GM23248 (cell line): ENCODE measurements at regions of chr11 and their contacts with region 1.

Region 1: DNA sequence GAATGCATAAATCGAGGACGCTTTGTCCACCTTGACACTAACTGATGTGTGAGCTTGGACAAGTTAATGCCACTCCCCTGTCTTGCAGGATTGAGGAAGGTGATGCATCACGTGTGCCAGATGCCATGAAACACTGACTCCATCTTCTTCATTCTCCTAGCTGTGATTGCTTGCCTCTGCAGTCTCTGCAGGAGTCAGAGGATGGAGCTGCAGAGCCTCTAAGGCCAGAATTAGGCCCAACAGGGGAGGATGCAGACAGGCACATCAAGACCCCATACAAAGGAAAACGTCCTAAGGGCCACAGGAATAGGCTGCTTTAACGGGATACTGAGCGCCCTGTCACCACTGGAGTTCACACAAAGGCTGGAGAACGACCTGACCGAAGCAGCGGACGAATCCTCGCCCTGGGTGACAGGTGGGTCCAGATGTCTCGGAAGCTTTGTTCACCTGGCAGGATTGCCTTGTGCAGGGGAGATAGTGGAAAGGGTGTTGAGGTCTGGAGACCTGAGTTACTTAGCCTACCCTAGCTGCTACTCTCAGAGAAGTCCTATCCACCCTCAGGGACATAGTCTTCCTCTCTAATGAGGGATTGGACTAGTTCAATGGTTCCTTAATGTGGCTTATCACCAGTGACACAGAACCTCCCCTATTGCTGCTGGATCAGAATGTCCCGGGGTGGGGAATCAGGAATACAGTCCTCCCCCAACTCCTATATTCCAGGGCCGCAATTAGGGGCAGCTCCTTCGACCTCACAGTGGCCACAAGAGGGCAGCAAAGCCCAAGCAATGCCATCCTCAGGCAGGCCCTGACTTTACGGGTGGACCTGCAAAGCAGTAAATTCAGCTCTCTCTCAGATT is 32.4 kb downstream of the DBX1 start:
- DNase-seq: peak; percentile 82
- H3K4me3 ChIP-seq: no peak overlapping the region
- H3K27ac ChIP-seq: no peak overlapping the region
- H3K4me1 ChIP-seq: peaks cover 8% of the 10 kb centered on the region; the same call in 1 of the 2 replicates
- H3K27me3 ChIP-seq: no peaks in the 10 kb centered on the region

Region 2: DNA sequence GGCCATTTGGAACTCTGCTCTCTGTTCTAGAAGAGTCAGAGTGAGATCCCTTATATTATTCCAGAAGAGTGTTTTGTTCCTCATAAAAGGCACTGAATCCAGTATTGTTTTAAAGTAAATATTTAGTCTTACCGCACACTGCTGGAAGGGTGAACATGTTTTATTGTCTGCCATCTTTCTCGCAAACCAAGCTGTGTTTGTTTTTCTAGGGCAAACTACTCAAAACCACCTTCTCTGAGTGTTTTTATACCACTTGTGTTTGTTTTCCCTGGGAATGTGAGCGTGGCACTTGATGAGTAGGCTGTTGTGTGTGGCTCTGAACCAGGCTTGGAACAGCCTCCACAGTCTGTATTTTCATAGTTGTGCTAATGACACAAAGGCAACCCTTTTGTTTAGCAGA is 57.4 kb before region 1 on chr11:
- in situ Hi-C with region 1: no loop called
- DNase-seq: no peak
- H3K4me3 ChIP-seq: no peak overlapping the region
- H3K27ac ChIP-seq: no peak overlapping the region
- H3K4me1 ChIP-seq: no peaks in the 10 kb centered on the region
- H3K27me3 ChIP-seq: no peaks in the 10 kb centered on the region

Region 3: GRCh38 chr11:20355221-20356219 is 227.6 kb after region 1 on chr11:
- in situ Hi-C with region 1: loop called (anchors 10 kb)
- DNase-seq: peak; percentile 72
- H3K4me3 ChIP-seq: no peak overlapping the region
- H3K27ac ChIP-seq: no peak overlapping the region
- H3K4me1 ChIP-seq: no peaks in the 10 kb centered on the region
- H3K27me3 ChIP-seq: peaks cover 5% of the 10 kb centered on the region; the same call in 1 of the 2 replicates